Transverse colon (tissue), 4 donors: ENCODE measurements at regions of chr15 and their contacts with region 1.

Region 1: DNA sequence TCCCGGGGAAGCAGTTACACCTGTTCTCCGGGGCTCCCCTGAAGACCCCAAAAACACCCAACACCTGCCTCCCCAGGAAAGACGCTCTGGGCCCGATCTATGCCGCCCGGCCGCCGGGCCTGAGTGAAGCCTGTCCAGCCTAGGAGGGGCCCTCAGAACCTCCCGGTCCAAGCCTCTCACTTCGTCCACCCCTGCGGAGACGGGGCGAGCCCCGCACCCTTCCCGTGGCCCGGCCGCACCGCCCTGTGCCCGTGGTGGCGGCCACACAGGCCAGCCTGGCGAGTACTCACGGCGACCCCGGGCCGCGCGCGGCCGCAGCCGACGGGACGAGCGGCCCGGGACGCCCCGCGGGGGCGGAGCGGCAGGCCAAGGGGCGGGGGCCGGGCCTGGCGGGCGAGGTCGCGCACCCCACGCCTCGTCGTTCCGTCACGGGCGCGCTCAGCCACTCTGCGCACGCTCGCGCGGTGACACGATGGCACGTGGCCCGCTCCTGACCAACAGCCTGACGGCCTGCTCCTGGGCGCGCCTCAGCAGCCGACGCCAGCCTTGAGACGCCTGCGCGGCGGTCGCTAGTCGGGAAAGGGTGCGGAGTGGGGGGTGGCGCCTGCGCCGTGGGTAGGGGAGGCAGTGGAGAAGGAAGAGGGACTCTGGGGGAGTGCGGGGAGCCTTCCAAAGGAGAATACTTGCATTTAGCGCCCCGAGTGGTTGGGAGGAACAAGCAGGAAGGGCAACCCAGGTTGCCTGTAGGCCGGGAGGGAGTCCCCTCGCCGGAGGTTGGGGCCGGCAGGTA is at the start of gene PARP6:
- DNase-seq: peak; percentile 98
- H3K4me3 ChIP-seq: peak within 1 kb of the TSS; percentile 76 to 95 (median 84)
- H3K27ac ChIP-seq: peak within 1 kb of the TSS; percentile 89 to 94 (median 92)
- H3K4me1 ChIP-seq: peaks cover 4 to 24% (median 10%) of the 10 kb centered on the region in 4 donors
- H3K27me3 ChIP-seq: no peaks in the 10 kb centered on the region
- CTCF ChIP-seq: peak; percentile 49 to 71 (median 59)
- EP300 ChIP-seq: no peak
- POLR2A ChIP-seq: peak; percentile 51
- total RNA-seq, gene PARP6: 44.1 to 152 (median 57.9) TPM

Region 2: GRCh38 chr15:71899674-71900073 is 372.7 kb before region 1 on chr15:
- in situ Hi-C with region 1: no loop called
- intact Hi-C with region 1: no loop called
- DNase-seq: no peak
- H3K4me3 ChIP-seq: no peak overlapping the region
- H3K27ac ChIP-seq: no peak overlapping the region
- H3K4me1 ChIP-seq: no peaks in the 10 kb centered on the region
- H3K27me3 ChIP-seq: no peaks in the 10 kb centered on the region
- CTCF ChIP-seq: no peak
- EP300 ChIP-seq: no peak
- POLR2A ChIP-seq: no peak

Region 3: GRCh38 chr15:72231066-72231846 is 41.2 kb before region 1 on chr15 and contains the start of gene PKM:
- in situ Hi-C with region 1: no loop called
- intact Hi-C with region 1: loop called (anchors 2 kb)
- DNase-seq: peak; percentile 98
- H3K4me3 ChIP-seq: peak within 1 kb of the TSS; percentile 39 to 93 (median 80)
- H3K27ac ChIP-seq: peak within 1 kb of the TSS; percentile 92 to 99 (median 97)
- H3K4me1 ChIP-seq: peaks cover 22 to 46% (median 43%) of the 10 kb centered on the region in 4 donors
- H3K27me3 ChIP-seq: no peaks in the 10 kb centered on the region
- CTCF ChIP-seq: no peak
- EP300 ChIP-seq: peak; percentile 42
- POLR2A ChIP-seq: peak; percentile 98
- total RNA-seq, gene PKM: 259 to 431 (median 291) TPM